A549 (cell line): ENCODE measurements at regions of chr22 and their contacts with region 1.

Region 1: DNA sequence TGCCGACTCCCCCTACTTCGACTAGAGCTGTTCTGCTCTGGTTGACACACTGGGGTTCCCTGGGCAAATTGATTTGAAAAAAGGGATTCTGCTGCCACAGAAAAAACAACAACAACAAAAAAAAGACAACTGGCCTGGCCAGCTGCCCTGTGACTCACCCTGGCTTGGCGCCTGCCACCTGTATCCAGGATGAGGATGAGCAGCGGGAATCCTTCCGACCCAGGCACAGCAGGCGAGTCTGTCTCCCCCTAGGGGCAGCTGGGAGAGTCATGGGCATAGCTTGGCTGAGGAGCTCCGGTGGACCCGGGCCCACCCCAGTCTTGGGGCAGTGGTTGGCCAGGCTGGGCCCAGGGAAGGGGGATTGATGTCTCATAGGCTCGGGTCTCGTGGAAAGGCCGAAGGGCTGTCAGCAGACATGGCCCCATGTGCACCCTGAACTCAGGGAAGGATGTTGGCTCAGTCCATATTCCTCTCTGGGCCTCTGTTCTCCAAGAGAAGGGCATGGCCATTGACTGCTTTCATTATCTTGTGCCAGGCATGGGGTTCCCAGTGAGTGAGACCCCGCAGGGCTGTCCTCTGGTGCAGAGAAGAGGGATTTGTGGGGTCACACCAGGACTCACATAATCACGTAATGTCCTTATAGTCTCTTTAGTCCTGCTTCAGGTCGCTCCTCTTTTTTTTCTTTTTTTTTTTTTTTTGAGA is 10.4 kb upstream of the SUN2 start:
- DNase-seq: peak; percentile 82 to 90
- ATAC-seq: peak; percentile 90 to 91
- H3K4me3 ChIP-seq: no peak overlapping the region
- H3K27ac ChIP-seq: peak overlapping the region; percentile 17 to 76; a peak in 4 of 6 replicates
- H3K4me1 ChIP-seq: peaks cover 29% of the 10 kb centered on the region
- CTCF ChIP-seq: peak; percentile 71
- EP300 ChIP-seq: no peak
- POLR2A ChIP-seq: no peak
- RAD21 ChIP-seq: peak; percentile 52

Region 2: GRCh38 chr22:38700789-38701628 is 65.2 kb before region 1 on chr22 and contains the start of gene JOSD1:
- CTCF ChIA-PET with region 1: no interaction called
- POLR2A ChIA-PET with region 1: no interaction called
- DNase-seq: peak; percentile 64 to 95
- ATAC-seq: peak; percentile 12 to 60
- H3K4me3 ChIP-seq: peak within 1 kb of the TSS; percentile 88
- H3K27ac ChIP-seq: peak within 1 kb of the TSS; percentile 96 to 99
- H3K4me1 ChIP-seq: peaks cover 45% of the 10 kb centered on the region
- CTCF ChIP-seq: no peak
- EP300 ChIP-seq: 0 out of 5 replicates have a peak, but pooled peaks of 1 of the 2 experiments have one; percentile 11
- POLR2A ChIP-seq: peak; percentile 72
- RAD21 ChIP-seq: no peak
- polyA plus RNA-seq, gene JOSD1: 37.5 and 40.9 TPM in 2 replicates

Region 3: DNA sequence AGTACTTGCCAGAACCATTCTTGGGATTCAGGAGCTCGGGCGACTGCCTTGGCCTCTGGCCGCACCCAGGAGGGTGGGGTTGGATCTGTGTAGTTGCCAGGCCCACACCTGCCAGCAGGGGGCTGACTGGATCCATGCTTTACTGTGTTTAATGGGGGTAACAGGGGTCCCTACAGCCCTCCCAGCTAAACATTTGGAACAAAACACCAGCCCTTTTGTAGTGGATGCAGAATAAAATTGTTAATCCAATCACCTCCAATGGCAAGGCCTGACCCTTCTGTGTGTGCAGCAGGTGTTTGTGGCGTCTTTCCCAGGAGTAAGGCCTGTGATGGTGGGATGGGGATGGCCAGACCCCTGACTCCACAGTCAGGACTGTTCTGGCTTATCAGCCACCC is 32.9 kb before region 1 on chr22:
- CTCF ChIA-PET with region 1: interaction called, 23 read pairs
- POLR2A ChIA-PET with region 1: no interaction called
- DNase-seq: peak; percentile 29 to 60
- ATAC-seq: peak; percentile 72 to 83
- H3K4me3 ChIP-seq: no peak overlapping the region
- H3K27ac ChIP-seq: no peak overlapping the region
- H3K4me1 ChIP-seq: no peaks in the 10 kb centered on the region
- CTCF ChIP-seq: peak; percentile 56
- EP300 ChIP-seq: no peak
- POLR2A ChIP-seq: no peak
- RAD21 ChIP-seq: peak; percentile 49 to 52; a peak in 4 of 5 replicates

Region 4: DNA sequence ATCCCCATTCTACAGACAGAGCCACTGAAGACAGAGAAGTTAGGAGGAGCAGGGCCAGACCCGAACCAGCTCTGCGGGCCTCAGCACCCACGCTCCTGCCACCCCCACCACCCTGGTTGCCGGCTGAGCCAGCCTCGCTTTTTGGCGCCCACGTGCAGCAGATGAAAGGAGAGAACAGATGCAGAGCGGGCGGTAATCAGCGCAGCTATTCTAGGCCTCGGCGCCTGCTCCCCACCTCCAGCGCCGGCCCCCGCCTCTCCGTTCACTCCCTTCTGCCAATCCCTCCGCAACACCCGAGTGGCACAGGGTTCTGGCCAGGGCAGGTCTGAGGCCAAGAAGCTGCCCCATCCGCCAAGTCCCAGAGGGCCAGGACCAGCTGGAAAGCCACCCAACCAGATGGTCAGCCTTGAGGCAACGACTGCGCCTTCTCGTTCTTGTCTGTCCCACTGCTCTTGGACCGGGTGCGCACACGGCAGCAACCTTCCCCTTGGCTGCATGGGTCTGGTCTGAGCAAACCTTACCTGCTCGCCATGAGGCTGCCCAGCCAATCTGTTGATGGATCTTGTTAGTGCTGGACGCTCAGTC is 11.0 kb after region 1 on chr22:
- CTCF ChIA-PET with region 1: interaction called, 19 read pairs
- POLR2A ChIA-PET with region 1: no interaction called
- DNase-seq: no peak
- ATAC-seq: no peak
- H3K4me3 ChIP-seq: no peak overlapping the region
- H3K27ac ChIP-seq: no peak overlapping the region
- H3K4me1 ChIP-seq: no peaks in the 10 kb centered on the region
- CTCF ChIP-seq: no peak
- EP300 ChIP-seq: no peak
- POLR2A ChIP-seq: no peak
- RAD21 ChIP-seq: no peak

Region 5: GRCh38 chr22:38802671-38803121 is 36.5 kb after region 1 on chr22:
- CTCF ChIA-PET with region 1: interaction called, 43 read pairs
- POLR2A ChIA-PET with region 1: no interaction called
- DNase-seq: peak; percentile 79 to 86
- ATAC-seq: peak; percentile 95 to 99
- H3K4me3 ChIP-seq: no peak overlapping the region
- H3K27ac ChIP-seq: peak overlapping the region; percentile 75 to 80
- H3K4me1 ChIP-seq: peaks cover 19% of the 10 kb centered on the region
- CTCF ChIP-seq: no peak
- EP300 ChIP-seq: peak in 1 of 2 experiments; percentile 14; a peak in 1 of 5 replicates
- POLR2A ChIP-seq: no peak
- RAD21 ChIP-seq: peak in 1 of 2 experiments; percentile 26; a peak in 1 of 5 replicates

Region 6: DNA sequence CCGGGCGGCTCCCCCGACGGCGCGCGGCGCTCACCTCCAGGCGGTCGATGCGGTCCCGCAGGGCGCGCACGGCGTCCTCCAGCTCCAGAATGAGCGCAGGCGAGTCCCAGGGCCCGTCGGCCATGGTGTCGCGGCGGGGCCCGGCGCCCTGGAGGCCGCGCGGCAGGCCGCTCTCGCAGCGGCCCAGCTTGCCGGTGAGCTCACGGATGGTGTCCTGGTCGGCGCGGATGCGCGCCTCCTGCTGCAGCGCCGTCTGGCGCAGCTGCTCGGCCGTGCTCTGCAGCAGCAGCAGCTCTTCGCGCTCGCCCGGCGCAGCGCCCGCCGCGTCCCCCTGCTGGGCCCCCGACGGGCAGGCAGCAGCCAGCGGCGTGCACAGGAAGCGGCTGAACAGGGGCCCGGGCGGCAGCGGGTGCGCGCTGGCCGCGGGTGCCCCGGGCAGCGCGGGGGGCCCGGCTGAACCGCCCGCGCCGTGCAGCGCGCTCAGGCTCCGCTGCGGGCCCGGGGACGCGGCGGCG is 77.0 kb after region 1 on chr22:
- CTCF ChIA-PET with region 1: interaction called, 95 read pairs
- POLR2A ChIA-PET with region 1: interaction called, 35 read pairs
- DNase-seq: peak; percentile 55 to 68
- ATAC-seq: peak; percentile 88 to 90
- H3K4me3 ChIP-seq: peak overlapping the region; percentile 74
- H3K27ac ChIP-seq: peak overlapping the region; percentile 69 to 94
- H3K4me1 ChIP-seq: peaks cover 22% of the 10 kb centered on the region; the same call in 2 of the 3 replicates
- CTCF ChIP-seq: peak; percentile 34; the same call in 2 of the 3 replicates
- EP300 ChIP-seq: no peak
- POLR2A ChIP-seq: no peak
- RAD21 ChIP-seq: peak in 1 of 2 experiments; percentile 45; a peak in 2 of 5 replicates

Region 7: GRCh38 chr22:38872172-38872830 is 106.1 kb after region 1 on chr22 and contains the start of gene CBX6:
- CTCF ChIA-PET with region 1: interaction called, 112 read pairs
- POLR2A ChIA-PET with region 1: interaction called, 3 read pairs
- DNase-seq: peak; percentile 86 to 91
- ATAC-seq: peak; percentile 65 to 72
- H3K4me3 ChIP-seq: peak within 1 kb of the TSS; percentile 88
- H3K27ac ChIP-seq: peak within 1 kb of the TSS; percentile 99 to 100
- H3K4me1 ChIP-seq: peaks cover 23% of the 10 kb centered on the region
- CTCF ChIP-seq: no peak
- EP300 ChIP-seq: peak in 1 of 2 experiments; percentile 15; a peak in 1 of 5 replicates
- POLR2A ChIP-seq: peak; percentile 51
- RAD21 ChIP-seq: no peak
- polyA plus RNA-seq, gene CBX6: 9.8 and 10.4 TPM in 2 replicates

Region 8: GRCh38 chr22:39003165-39003638 is 237.0 kb after region 1 on chr22:
- CTCF ChIA-PET with region 1: interaction called, 14 read pairs
- POLR2A ChIA-PET with region 1: no interaction called
- DNase-seq: peak; percentile 68 to 74
- ATAC-seq: peak; percentile 95 to 97
- H3K4me3 ChIP-seq: no peak overlapping the region
- H3K27ac ChIP-seq: peak overlapping the region in 1 of 2 experiments; percentile 29; a peak in 2 of 6 replicates
- H3K4me1 ChIP-seq: peaks cover 3% of the 10 kb centered on the region; the same call in 1 of the 3 replicates
- CTCF ChIP-seq: peak; percentile 64
- EP300 ChIP-seq: no peak
- POLR2A ChIP-seq: no peak
- RAD21 ChIP-seq: peak; percentile 63 to 71